Sigmoid colon (tissue), 7 donors: ENCODE measurements at regions of chr2 and their contacts with region 1.

Region 1: DNA sequence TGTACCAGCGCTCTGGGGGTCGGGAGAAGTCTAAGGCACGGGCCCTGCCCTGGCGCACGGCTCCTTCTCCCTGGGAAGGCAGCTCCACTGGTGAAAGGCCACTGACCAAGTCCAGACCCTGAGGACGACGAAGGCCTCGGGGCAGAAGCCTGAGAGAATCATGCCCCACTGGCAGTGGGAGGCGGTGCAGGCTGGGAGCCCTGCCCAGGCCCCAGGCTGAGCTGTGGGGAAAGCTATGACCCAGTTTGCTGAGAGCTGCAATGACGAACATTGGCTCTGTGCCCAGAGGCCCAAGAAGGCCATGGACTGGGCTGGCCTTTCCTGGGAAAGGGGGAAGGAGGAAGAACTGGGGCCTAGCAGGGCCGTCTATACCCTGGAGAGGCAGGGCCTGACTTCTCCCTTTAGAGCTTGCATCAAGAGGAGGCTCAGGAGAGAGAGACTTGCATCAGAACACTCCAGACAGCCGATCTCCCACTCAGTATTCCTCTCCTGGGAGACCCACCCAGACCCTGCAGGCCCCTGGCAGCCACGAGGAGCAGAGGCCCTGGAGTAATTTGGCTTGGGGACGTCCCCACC is 32.9 kb downstream of the HS1BP3 start:
- DNase-seq: peak; percentile 100
- H3K4me3 ChIP-seq: no peak overlapping the region
- H3K27ac ChIP-seq: peak overlapping the region; percentile 96 to 98 (median 98)
- H3K4me1 ChIP-seq: peaks cover 0 to 94% (median 86%) of the 10 kb centered on the region in 4 donors
- H3K27me3 ChIP-seq: no peaks in the 10 kb centered on the region
- CTCF ChIP-seq: peak; percentile 69 to 82 (median 71)
- EP300 ChIP-seq: peak; percentile 94 to 99 (median 96)
- POLR2A ChIP-seq: peak; percentile 7 to 61

Region 2: GRCh38 chr2:20450204-20450999 is 167.6 kb before region 1 on chr2:
- intact Hi-C with region 1: loop called (anchors 1 kb)
- DNase-seq: peak; percentile 97
- H3K4me3 ChIP-seq: peak overlapping the region; percentile 61 to 100 (median 98)
- H3K27ac ChIP-seq: peak overlapping the region; percentile 93 to 98 (median 98)
- H3K4me1 ChIP-seq: peaks cover 0 to 36% (median 28%) of the 10 kb centered on the region in 4 donors
- H3K27me3 ChIP-seq: no peaks in the 10 kb centered on the region
- CTCF ChIP-seq: peak in 1 of 4 experiments; percentile 7
- EP300 ChIP-seq: peak in 3 of 4 donors; percentile 96 to 97 (median 97)
- POLR2A ChIP-seq: peak; percentile 57 to 60